Left lung (tissue), 14 donors: ENCODE measurements at regions of chr21 and their contacts with region 1.

Region 1: DNA sequence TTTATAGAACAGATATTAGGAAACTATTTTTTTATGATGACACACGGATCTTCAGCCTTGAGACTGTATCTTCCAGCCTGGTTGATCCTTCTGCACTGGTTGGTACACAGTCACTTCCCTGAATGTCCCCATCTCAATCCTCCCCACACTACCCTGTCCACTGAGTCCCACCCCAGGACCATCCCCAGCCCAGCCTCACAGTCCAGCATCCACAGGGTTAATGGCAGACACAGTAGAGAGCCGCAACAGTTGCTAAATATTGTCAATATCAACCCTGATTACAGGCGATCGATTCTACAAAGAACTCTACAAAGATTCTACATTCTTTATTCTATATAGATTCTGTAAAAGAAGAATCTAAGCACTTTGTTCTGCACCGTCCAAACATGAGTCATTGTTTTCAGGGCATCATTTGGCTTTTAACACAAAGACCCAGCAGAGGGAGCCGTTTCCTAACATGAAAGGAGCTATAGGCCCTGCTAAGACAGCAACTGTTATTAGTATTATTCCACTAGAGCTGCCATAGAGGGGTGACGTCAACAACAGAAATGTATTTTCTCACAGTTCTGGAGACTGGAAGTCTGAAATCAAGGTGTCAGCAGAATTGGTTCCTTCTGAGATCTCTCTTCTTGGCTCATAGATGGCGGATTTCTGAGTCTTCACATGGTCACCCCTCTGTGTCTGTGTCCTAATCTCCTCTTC is 30.1 kb upstream of the IFNAR2 start:
- DNase-seq: peak in 3 of 4 donors; percentile 81 to 94 (median 84)
- ATAC-seq: peak; percentile 62
- H3K4me3 ChIP-seq: no peak overlapping the region
- H3K27ac ChIP-seq: peak overlapping the region; percentile 57 to 83
- H3K4me1 ChIP-seq: peaks cover 19 to 69% of the 10 kb centered on the region in 2 donors
- H3K27me3 ChIP-seq: no peaks in the 10 kb centered on the region
- CTCF ChIP-seq: peak; percentile 65 to 86

Region 2: GRCh38 chr21:32834916-32835235 is 364.8 kb before region 1 on chr21:
- intact Hi-C with region 1: loop called in 1 of 2 experiments (anchors 10 kb)
- DNase-seq: no peak
- ATAC-seq: no peak
- H3K4me3 ChIP-seq: no peak overlapping the region
- H3K27ac ChIP-seq: no peak overlapping the region
- H3K4me1 ChIP-seq: no peaks in the 10 kb centered on the region
- H3K27me3 ChIP-seq: no peaks in the 10 kb centered on the region
- CTCF ChIP-seq: no peak

Region 3: GRCh38 chr21:32994305-32994704 is 205.4 kb before region 1 on chr21:
- intact Hi-C with region 1: loop called in 1 of 2 experiments (anchors 10 kb)
- DNase-seq: no peak
- ATAC-seq: peak; percentile 56
- H3K4me3 ChIP-seq: no peak overlapping the region
- H3K27ac ChIP-seq: no peak overlapping the region
- H3K4me1 ChIP-seq: no peaks in the 10 kb centered on the region
- H3K27me3 ChIP-seq: peaks cover 4 to 30% of the 10 kb centered on the region in 2 donors
- CTCF ChIP-seq: no peak

Region 4: GRCh38 chr21:33101300-33102005 is 98.2 kb before region 1 on chr21:
- intact Hi-C with region 1: no loop called
- DNase-seq: peak in 1 of 4 donors; percentile 83
- ATAC-seq: no peak
- H3K4me3 ChIP-seq: no peak overlapping the region
- H3K27ac ChIP-seq: no peak overlapping the region
- H3K4me1 ChIP-seq: no peaks in the 10 kb centered on the region
- H3K27me3 ChIP-seq: peaks cover 0 to 50% of the 10 kb centered on the region in 2 donors
- CTCF ChIP-seq: no peak

Region 5: GRCh38 chr21:33374450-33375096 is 174.9 kb after region 1 on chr21:
- intact Hi-C with region 1: loop called in 1 of 2 experiments (anchors 10 kb)
- DNase-seq: peak in 2 of 4 donors; percentile 43 to 65
- ATAC-seq: peak; percentile 89
- H3K4me3 ChIP-seq: no peak overlapping the region
- H3K27ac ChIP-seq: peak overlapping the region; percentile 62 to 84
- H3K4me1 ChIP-seq: peaks cover 11 to 39% of the 10 kb centered on the region in 2 donors
- H3K27me3 ChIP-seq: no peaks in the 10 kb centered on the region
- CTCF ChIP-seq: peak; percentile 48 to 57

Region 6: GRCh38 chr21:33394260-33394659 is 194.6 kb after region 1 on chr21:
- intact Hi-C with region 1: no loop called
- DNase-seq: peak in 1 of 4 donors; percentile 66
- ATAC-seq: peak; percentile 70
- H3K4me3 ChIP-seq: no peak overlapping the region
- H3K27ac ChIP-seq: peak overlapping the region in 1 of 2 donors; percentile 83
- H3K4me1 ChIP-seq: peaks cover 4 to 90% of the 10 kb centered on the region in 2 donors
- H3K27me3 ChIP-seq: no peaks in the 10 kb centered on the region
- CTCF ChIP-seq: no peak

Region 7: GRCh38 chr21:33444499-33444898 is 244.8 kb after region 1 on chr21:
- intact Hi-C with region 1: loop called in 1 of 2 experiments (anchors 2 kb)
- DNase-seq: peak in 1 of 4 donors; percentile 55
- ATAC-seq: peak; percentile 72
- H3K4me3 ChIP-seq: no peak overlapping the region
- H3K27ac ChIP-seq: peak overlapping the region; percentile 73 to 77
- H3K4me1 ChIP-seq: peaks cover 15 to 43% of the 10 kb centered on the region in 2 donors
- H3K27me3 ChIP-seq: no peaks in the 10 kb centered on the region
- CTCF ChIP-seq: no peak